ENCODE measurements at regions of chr20 and their contacts with region 1.

Region 1: DNA sequence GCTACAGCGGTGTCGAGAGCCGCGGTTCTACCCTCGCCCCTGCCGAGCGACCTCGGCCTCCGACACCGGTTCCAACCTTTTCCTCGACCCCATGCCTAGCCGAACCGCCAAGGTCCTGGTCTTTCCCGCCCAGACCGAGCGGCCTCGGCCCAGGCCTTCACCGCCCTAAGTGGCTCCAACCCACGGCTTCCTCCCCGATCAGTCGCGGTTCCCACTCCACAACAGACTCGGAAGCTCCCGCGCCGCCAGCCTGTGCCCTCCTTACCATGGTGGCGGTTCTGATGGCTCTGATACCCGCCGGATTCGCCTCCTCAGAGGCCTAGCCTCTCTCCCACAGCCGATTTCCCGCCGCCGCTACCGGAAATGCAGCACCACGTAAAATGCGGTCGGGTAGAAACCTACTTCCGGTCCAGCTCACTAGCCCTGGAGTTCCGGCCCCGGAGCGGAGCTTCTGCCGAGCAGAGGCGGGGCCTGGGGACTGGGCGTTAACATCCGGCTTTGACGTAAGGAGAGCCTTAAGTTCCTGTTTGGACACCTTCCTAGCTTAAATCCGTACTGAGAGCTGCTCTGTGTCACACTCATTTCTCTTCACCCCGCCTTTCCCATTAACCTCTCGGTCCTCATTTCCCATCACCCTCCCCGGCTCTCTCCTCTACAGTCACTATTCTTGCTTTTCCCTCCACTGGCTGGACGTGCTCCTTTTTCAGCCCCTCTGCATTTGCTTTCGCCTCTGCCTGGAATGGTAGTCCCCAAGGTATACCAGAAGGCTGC is at the start of gene SNRPB:
- DNase-seq: peak; percentile 99
- H3K4me3 ChIP-seq: peak within 1 kb of the TSS; percentile 66 to 97 (median 93)
- H3K4me3 Mint-ChIP-seq: peak within 1 kb of the TSS; percentile 96 to 97
- H3K27ac ChIP-seq: peak within 1 kb of the TSS; percentile 88 to 93
- H3K27ac Mint-ChIP-seq: peak within 1 kb of the TSS; percentile 96 to 99 (median 98)
- H3K4me1 ChIP-seq: peaks cover 17 to 28% of the 10 kb centered on the region in 2 donors
- H3K4me1 Mint-ChIP-seq: peaks cover 26% of the 10 kb centered on the region
- H3K27me3 ChIP-seq: no peaks in the 10 kb centered on the region
- H3K27me3 Mint-ChIP-seq: no peaks in the 10 kb centered on the region
- CTCF ChIP-seq: no peak
- polyA plus RNA-seq, gene SNRPB: 136 to 213 (median 183) TPM

Region 2: DNA sequence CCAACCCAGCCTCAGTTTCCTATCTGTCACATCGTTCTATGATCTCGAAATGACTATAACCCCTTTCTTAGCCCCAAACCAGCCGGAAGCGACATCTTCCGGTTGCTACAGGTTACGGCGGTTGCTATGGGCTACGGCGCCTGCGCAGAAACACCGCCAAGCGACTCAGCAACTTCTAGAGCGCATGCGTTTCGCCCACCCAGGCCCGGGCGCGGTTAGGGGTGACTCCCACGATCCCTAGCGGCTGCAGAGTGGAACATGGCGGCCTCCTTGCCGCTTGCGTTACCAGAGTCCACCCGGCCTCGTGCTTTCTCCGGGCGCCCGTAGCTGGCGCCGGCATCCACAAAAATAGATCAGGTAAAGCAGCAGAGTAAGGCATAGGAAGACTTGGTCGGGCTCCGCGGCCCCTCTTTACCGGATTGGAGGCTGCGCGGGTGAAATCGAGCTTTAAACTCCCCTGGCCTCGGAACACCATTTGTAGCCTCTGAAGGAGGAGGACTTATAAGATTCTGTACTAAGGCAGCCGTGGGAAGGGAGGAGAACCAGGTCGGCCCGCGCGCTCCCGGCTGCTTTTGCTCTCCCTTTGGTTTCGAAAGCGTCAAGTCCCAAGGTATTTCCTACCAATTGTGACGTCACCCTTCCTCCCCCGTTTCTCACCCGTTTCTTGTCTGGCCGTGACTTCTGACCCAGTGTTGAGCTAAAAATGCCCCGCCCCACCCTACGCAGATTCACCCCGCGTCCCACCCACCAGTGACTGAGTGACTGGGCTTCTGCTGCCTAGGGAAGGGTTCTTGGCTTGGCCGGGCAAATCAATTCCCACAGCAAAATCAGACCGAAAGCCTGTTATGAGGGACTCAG is 1145.2 kb before region 1 on chr20:
- intact Hi-C with region 1: loop called in 1 of 2 experiments (anchors 10 kb)
- DNase-seq: peak; percentile 98 to 99 (median 99)
- H3K4me3 ChIP-seq: peak overlapping the region; percentile 66 to 85 (median 75)
- H3K4me3 Mint-ChIP-seq: no peak overlapping the region
- H3K27ac ChIP-seq: peak overlapping the region; percentile 92 to 99
- H3K27ac Mint-ChIP-seq: no peak overlapping the region
- H3K4me1 ChIP-seq: peaks cover 16 to 30% of the 10 kb centered on the region in 2 donors
- H3K4me1 Mint-ChIP-seq: peaks cover 35% of the 10 kb centered on the region
- H3K27me3 ChIP-seq: no peaks in the 10 kb centered on the region
- H3K27me3 Mint-ChIP-seq: peaks cover 0 to 3% (median 0%) of the 10 kb centered on the region in 3 donors
- CTCF ChIP-seq: no peak

Region 3: DNA sequence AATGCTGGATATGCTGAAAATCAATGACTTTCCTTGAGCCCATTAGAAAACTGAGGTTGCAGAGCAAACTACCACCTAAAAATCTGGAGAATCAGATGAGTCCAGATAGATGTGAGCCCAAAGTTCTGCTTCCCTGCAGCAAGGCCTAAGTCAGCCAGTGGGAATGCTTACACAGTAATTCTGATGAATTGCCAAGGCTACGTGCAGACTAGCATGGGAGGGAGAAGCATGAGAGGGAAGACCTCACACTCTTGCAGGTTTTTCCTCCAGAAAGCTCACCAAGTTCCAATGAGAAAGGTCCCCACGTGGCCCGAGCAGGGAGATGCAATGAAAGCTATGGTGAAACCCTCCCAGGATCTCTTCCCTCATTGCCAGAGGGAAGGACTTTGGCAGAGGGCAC is 680.2 kb before region 1 on chr20:
- intact Hi-C with region 1: no loop called
- DNase-seq: no peak
- H3K4me3 ChIP-seq: no peak overlapping the region
- H3K4me3 Mint-ChIP-seq: no peak overlapping the region
- H3K27ac ChIP-seq: no peak overlapping the region
- H3K27ac Mint-ChIP-seq: no peak overlapping the region
- H3K4me1 ChIP-seq: peaks cover 17 to 24% of the 10 kb centered on the region in 2 donors
- H3K4me1 Mint-ChIP-seq: peaks cover 22% of the 10 kb centered on the region
- H3K27me3 ChIP-seq: peaks cover 28 to 31% of the 10 kb centered on the region in 2 donors
- H3K27me3 Mint-ChIP-seq: peaks cover 22 to 46% (median 33%) of the 10 kb centered on the region in 3 donors
- CTCF ChIP-seq: no peak

Region 4: DNA sequence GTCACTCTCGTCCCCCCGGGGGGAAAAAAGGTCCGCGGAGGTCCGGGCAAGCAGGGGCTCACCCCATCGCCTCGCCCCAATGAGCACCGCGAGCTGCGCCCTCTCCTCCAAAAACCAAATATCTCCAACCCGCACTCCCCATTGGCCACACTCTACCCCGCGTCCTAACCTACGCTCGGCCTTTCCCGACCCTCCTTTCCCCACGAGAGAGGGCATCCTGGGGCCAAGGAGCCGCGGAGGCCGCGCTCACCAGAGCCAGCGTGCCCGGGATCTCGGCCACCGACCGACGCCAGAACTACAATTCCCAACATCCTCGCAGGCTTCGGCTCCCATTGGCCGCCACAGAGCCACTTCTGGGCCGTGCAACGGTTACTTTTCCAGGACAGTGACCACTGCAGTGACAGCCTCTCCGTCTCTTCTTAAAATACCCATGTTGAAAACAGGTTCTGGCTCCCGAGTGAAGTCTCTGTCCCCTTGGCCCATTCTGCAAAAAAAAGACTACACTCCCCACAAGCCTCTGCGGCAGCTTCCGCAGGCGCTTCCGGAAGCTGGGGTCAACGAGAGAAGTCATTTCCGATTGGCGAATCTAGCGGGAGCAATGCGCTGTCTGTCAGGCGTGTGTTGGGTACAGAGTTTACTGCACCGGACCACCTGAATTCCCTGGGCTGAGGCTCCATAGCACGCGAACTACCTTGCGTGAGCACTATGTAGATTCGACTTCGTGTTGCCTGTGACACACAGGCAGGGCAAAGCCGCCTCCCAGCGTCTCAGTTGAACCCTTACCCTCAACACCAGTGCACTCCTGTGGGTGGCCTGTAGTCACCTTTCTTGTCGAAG is 38.2 kb after region 1 on chr20 and contains the start of gene ZNF343:
- intact Hi-C with region 1: loop called (anchors 5 kb)
- DNase-seq: peak; percentile 70 to 78 (median 74)
- H3K4me3 ChIP-seq: peak within 1 kb of the TSS; percentile 62 to 78 (median 77)
- H3K4me3 Mint-ChIP-seq: peak within 1 kb of the TSS; percentile 98 to 100
- H3K27ac ChIP-seq: peak within 1 kb of the TSS; percentile 18 to 81
- H3K27ac Mint-ChIP-seq: peak within 1 kb of the TSS; percentile 81 to 99 (median 96)
- H3K4me1 ChIP-seq: peaks cover 14 to 15% of the 10 kb centered on the region in 2 donors
- H3K4me1 Mint-ChIP-seq: peaks cover 20% of the 10 kb centered on the region
- H3K27me3 ChIP-seq: peaks cover 3 to 7% of the 10 kb centered on the region in 2 donors
- H3K27me3 Mint-ChIP-seq: peaks cover 5 to 16% (median 8%) of the 10 kb centered on the region in 3 donors
- CTCF ChIP-seq: no peak
- polyA plus RNA-seq, gene ZNF343: 1.3 to 6.7 (median 1.3) TPM

Measured in CD14-positive monocyte (primary cell).